Right ventricle myocardium inferior (tissue), 1 donor: ENCODE measurements at regions of chr7 and their contacts with region 1.

Region 1: DNA sequence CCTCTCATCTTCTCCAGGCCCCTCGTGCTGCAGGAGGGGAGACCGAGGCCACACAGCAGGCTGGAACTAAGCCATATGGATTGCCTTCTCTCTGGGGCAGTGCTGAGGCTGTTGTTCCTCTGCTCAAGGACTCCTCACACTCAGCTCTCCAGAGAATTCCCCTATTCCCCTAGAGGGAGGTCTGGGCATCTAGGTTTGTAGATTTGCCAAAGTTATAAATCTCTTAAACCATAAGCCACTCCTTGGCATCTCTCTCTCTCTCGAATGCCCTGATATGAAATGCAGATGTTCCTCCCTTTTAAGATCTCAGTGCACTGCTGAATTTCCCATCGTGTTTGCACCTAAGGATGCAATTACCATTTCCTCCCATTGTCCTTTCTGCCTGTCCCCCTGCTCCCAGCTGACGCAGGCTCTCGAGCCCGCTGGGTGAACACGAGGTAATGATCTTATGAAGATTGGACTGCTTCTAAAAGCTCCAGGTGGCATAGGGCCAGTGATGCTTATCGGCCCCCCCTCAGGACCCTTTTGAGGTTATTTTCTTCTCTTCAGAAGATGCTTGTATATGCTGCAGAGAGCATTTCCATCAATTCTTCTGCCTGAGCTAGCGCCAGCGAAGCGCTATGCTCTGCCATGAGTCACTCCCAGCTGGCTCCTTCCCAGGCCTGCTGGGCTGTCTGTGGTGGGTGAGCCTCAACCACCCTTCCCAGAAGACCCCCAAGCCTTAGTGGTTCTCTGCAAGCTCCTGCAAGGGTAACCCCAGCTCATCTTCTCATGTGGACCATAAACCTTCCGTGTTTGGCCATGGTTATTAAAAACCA is 41.6 kb upstream of the AQP1 start:
- DNase-seq: peak; percentile 76
- ATAC-seq: no peak

Region 2: DNA sequence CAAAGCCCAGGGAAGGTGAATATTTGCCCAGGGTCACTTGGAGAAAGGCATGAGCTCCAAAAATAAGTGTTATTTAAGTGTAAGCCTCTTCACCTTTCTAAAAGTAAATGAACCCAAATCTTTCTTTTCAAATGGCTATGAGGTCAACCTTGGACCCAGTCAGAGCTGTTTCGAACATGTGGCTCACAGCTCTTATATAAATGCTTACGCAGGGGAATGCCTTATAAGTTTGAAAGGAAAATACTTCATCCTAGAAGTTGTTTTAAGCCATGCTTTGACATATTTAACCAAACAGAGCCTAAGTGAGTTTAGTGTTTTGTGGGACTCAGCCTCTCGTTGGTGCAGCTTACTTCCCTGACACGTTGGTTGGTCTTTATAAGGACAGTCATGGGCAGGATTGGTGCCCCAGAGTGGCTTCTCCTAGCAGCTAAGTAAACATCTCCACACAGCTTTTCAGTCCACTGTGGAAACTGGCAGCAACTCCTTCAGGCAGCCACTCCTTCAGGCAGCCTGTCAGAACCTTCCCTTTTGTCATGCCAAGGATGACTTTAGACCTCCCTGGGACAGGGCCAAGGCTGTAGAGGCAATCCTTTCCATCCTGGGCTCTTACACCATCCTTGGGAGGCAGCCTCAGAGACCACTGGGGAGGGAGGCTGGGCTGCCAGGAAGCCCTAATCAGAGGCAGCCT is 55.2 kb before region 1 on chr7:
- intact Hi-C with region 1: loop called (anchors 2 kb)
- DNase-seq: peak; percentile 72
- ATAC-seq: peak; percentile 75

Region 3: GRCh38 chr7:30908681-30909080 is 38.7 kb after region 1 on chr7:
- intact Hi-C with region 1: loop called (anchors 5 kb)
- DNase-seq: no peak
- ATAC-seq: no peak